ENCODE measurements at regions of chr9 and their contacts with region 1.

Region 1: GRCh38 chr9:127336738-127337251 is 60.2 kb upstream of the SLC2A8 start:
- DNase-seq: peak; percentile 76 to 95
- H3K4me3 ChIP-seq: peak overlapping the region; percentile 5; the same call in 1 of the 2 replicates
- H3K27ac ChIP-seq: peak overlapping the region; percentile 57
- H3K4me1 ChIP-seq: peaks cover 47% of the 10 kb centered on the region
- H3K27me3 ChIP-seq: no peaks in the 10 kb centered on the region
- CTCF ChIP-seq: no peak

Region 2: GRCh38 chr9:127311239-127311741 is 25.5 kb before region 1 on chr9:
- CTCF ChIA-PET with region 1: interaction called, 4 read pairs
- POLR2A ChIA-PET with region 1: no interaction called
- intact Hi-C with region 1: loop called (anchors 2 kb)
- DNase-seq: peak; percentile 63 to 84
- H3K4me3 ChIP-seq: no peak overlapping the region
- H3K27ac ChIP-seq: no peak overlapping the region; the same call in 1 of the 2 replicates
- H3K4me1 ChIP-seq: peaks cover 34% of the 10 kb centered on the region
- H3K27me3 ChIP-seq: no peaks in the 10 kb centered on the region
- CTCF ChIP-seq: peak; percentile 62; the same call in 1 of the 2 replicates